ENCODE measurements at regions of chr3 and their contacts with region 1.

Region 1: DNA sequence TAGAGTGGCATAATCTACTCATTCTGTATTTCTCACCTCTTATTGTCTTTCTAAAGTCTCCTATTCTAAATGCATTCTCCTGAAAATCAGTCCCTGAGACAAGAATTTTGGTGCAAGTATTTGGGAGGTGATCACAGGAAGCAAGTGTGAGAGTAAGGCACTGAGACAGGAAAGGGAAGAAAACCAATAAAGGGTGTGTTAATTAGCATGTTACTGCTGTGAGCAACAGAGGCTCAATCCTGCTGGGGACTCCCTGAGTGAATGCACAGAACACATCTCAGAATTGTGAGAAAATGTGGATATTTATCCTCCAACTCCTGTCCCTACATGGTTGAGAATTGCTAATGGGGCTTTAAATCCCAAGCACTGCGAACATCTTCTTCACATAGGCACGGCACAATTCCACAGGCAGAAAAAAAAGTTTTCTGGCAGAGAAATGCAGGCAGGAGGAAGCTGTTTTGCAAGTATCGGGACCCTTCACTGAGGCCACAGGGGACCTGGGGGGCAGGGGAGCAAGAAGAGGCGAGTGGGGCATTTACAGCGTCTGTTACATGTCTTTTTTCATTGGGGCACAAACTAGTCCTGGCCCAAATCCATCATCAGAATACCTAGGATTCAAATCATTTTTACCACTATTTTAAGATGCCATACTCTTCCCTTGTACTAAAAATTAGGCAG is 27.2 kb upstream of the STT3B start:
- DNase-seq: no peak
- ATAC-seq: no peak
- H3K4me3 ChIP-seq: no peak overlapping the region
- H3K27ac ChIP-seq: no peak overlapping the region
- H3K4me1 ChIP-seq: no peaks in the 10 kb centered on the region
- H3K27me3 ChIP-seq: no peaks in the 10 kb centered on the region; a peak in 1 of 4 replicates
- CTCF ChIP-seq: no peak
- EP300 ChIP-seq: no peak
- POLR2A ChIP-seq: no peak
- RAD21 ChIP-seq: no peak

Region 2: GRCh38 chr3:31515486-31516284 is 10.2 kb after region 1 on chr3:
- CTCF ChIA-PET with region 1: interaction called, 3 read pairs
- POLR2A ChIA-PET with region 1: interaction called, 9 read pairs
- RAD21 ChIA-PET with region 1: interaction called, 3 read pairs
- SMC1A ChIA-PET with region 1: interaction called, 10 read pairs
- in situ Hi-C with region 1: no loop called
- intact Hi-C with region 1: no loop called
- DNase-seq: no peak
- ATAC-seq: no peak
- H3K4me3 ChIP-seq: no peak overlapping the region
- H3K27ac ChIP-seq: no peak overlapping the region
- H3K4me1 ChIP-seq: no peaks in the 10 kb centered on the region
- H3K27me3 ChIP-seq: no peaks in the 10 kb centered on the region
- CTCF ChIP-seq: no peak
- EP300 ChIP-seq: no peak
- POLR2A ChIP-seq: no peak
- RAD21 ChIP-seq: no peak

Measured in GM12878 (cell line).